Mucosa of descending colon (tissue), 3 donors: ENCODE measurements at regions of chr20 and their contacts with region 1.

Region 1: GRCh38 chr20:37534401-37535157 is 6.9 kb upstream of the BLCAP start:
- DNase-seq: peak in 1 of 3 donors; percentile 93
- ATAC-seq: peak; percentile 92
- H3K4me3 ChIP-seq: no peak overlapping the region
- H3K4me1 ChIP-seq: peaks cover 15% of the 10 kb centered on the region
- CTCF ChIP-seq: peak; percentile 81

Region 2: DNA sequence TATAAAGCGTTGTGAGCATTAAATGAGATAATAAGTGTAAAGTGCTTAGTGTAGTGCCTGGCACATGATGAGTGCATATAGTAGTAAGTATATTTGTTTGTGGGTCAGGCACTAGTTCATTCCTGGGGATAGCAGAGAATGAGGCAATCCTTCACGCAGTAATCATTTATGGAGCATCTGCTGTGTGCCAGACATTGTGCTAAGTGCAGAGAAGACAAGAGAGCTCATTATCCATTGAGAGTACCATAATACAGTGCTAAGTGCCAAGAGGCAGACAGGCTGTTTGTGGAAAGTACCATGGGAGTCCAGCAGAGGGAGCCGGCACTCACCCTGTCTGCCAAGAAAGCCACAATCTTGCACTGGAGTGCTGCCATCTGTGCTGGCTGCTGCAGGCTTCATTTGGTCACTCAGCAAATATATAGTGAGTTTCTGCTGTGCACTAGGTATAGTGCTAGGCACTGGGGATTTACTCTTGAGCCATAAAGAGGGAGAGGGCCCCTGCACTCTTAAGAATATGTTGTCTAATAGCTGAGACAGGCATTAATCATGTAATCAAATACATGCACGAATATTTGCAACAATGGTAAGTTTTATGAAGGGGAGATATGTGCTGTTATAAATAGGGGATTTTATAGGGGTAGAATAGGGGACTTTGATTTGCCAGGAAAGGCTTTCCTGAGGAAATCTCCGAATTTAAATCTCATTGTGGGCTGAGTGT is 342.3 kb before region 1 on chr20:
- intact Hi-C with region 1: loop called (anchors 10 kb)
- DNase-seq: peak; percentile 75 to 94 (median 88)
- ATAC-seq: peak; percentile 98
- H3K4me3 ChIP-seq: no peak overlapping the region
- H3K4me1 ChIP-seq: peaks cover 7% of the 10 kb centered on the region
- CTCF ChIP-seq: peak; percentile 90

Region 3: DNA sequence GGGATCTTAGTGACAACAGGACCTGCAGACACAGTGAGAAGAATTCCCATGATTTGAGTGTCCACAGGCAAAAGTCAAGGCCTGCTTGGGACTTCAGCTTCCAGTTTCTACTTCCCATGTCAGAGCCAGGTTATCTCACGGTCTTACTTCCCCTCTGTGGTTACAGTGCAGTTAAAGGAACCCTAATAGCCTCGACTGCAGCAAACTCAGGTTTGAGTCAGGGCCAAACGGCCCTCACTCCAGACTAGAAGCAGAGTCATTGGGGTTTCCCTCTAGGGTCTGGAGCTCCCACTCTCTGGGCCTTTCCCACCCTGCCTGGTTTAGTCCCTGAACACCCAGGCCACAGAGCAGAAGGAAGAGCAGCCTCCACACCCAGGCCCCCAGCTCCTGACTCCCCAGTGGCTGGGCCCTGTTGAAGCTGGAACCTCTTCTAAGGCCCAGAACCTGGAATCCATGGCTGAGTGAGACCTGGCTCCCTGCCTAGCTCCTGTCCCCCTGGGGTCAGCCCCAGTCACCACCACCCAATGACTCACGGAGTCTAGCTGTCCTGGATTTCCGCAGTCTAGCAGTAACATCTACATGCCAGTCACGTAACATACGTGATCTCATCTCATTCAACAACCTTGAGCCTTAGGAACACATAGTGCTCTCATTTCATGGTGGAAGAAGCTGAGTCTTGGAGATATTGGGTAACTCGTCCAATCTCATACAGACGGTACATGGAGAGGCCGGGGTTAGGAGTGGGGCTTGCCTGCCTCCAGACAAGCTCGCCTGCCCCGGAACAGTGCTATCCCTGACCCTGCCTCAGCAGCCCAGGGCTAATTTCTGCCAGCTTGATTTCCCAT is 263.8 kb before region 1 on chr20:
- intact Hi-C with region 1: loop called (anchors 5 kb)
- DNase-seq: peak in 1 of 3 donors; percentile 16
- ATAC-seq: peak; percentile 52
- H3K4me3 ChIP-seq: no peak overlapping the region
- H3K4me1 ChIP-seq: peaks cover 5% of the 10 kb centered on the region
- CTCF ChIP-seq: no peak

Region 4: GRCh38 chr20:37276494-37277252 is 257.9 kb before region 1 on chr20:
- intact Hi-C with region 1: loop called (anchors 5 kb)
- DNase-seq: peak in 2 of 3 donors; percentile 45 to 59
- ATAC-seq: peak; percentile 90
- H3K4me3 ChIP-seq: no peak overlapping the region
- H3K4me1 ChIP-seq: peaks cover 4% of the 10 kb centered on the region
- CTCF ChIP-seq: no peak

Region 5: DNA sequence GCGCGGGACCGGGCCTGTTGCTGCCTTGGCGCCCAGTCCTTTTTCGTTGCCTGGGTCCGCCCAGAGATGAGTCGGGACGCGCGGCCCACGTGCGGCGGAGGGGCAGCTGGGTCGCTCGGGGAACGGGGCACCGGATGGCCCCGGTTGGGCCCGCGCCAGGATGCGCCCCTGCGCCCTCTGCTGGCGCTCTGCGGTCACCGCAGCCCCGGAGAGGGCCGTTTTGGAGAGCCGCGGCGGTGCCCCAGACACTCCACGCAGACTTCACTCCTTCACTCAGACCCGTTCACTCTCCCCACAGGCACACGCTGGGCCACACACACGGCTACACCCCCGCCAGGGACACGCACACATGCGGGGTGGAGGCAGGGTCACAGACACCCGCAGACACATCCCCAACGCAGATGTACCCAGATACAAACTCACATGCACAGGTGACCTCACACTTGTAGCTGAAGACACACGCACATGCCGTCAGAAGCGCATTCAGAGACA is 149.8 kb before region 1 on chr20:
- intact Hi-C with region 1: loop called (anchors 10 kb)
- DNase-seq: peak; percentile 70 to 82 (median 75)
- ATAC-seq: peak; percentile 83
- H3K4me3 ChIP-seq: no peak overlapping the region
- H3K4me1 ChIP-seq: peaks cover 13% of the 10 kb centered on the region
- CTCF ChIP-seq: peak; percentile 90